ENCODE measurements at regions of chr4 and their contacts with region 1.

Region 1: DNA sequence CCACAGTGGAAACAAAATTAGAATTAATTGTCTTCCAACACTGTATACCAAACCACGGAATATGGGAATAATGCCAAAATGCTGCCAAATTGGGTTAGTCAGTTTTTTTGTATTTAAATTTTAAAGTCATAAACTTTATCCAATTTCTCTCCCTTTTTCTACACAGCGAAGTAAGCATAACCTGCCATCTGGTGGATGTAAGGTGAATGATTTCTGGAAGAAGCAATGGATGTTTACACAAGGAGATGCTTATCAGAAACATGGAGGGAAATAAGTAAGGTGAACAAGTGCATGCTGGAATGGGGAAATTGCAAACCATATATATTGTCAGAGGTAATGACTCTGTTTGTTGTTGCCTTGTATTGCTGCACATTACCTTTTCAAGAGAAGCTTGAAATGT is 691.9 kb downstream of the TECRL start:
- DNase-seq: peak; percentile 82
- ATAC-seq: peak; percentile 70
- H3K4me3 ChIP-seq: no peak overlapping the region
- H3K27ac ChIP-seq: no peak overlapping the region
- H3K4me1 ChIP-seq: no peaks in the 10 kb centered on the region
- H3K27me3 ChIP-seq: no peaks in the 10 kb centered on the region
- CTCF ChIP-seq: peak; percentile 85

Region 2: DNA sequence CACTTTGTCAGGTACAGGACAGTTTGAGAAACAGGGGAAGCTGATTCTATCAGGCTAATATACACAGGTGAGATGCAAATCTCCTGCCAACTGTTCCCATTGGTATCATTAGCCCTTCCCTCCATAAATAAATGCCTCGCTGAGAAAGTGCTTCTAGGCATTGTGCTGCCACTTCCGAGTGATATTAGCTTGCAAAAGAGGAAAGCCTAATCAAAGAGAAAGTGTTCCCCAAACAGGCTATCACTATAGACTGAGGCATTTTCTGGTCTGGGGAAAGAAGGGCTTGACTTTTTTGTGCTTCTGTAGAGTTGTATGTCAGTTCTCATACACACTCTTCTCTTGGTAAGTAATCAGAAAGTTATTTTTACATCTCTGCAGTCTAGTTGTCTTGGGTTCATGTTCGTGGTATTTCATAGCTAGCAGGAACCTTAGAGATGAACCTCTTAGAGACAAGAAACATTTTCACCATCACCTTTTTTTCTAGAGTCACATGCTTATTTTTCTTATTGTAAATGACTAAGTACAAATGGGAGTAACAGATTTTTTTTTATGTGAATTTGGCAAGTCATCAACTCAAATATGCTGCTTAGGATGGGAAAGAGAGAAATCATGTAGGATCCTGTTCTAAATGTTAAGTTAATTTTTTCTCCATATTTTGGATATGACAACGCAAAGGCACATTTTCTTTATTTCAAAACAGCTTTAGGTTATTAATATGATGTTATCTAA is 1507.5 kb before region 1 on chr4:
- CTCF ChIA-PET with region 1: no interaction called
- POLR2A ChIA-PET with region 1: no interaction called
- intact Hi-C with region 1: no loop called
- DNase-seq: no peak
- ATAC-seq: no peak
- H3K4me3 ChIP-seq: no peak overlapping the region
- H3K27ac ChIP-seq: no peak overlapping the region
- H3K4me1 ChIP-seq: no peaks in the 10 kb centered on the region
- H3K27me3 ChIP-seq: no peaks in the 10 kb centered on the region
- CTCF ChIP-seq: no peak

Region 3: DNA sequence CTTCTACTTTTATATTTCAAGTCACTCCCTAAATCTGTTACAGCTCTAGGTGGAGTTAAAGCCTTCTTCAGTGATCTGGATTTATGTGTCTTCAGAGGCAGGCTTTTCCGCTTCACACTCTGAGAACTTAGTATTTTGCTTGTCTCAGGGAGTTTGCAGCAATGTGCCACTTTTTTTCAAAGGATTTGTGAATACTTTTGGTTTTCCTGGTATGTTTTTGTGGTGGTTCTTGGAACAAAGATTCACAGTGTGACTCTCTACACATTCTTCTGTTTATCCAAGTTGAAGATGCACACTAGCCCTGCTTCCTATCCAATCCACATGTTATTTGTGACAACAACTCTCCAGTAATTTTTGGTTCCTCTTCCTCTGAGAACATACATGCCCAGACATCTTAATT is 561.8 kb before region 1 on chr4:
- CTCF ChIA-PET with region 1: no interaction called
- POLR2A ChIA-PET with region 1: no interaction called
- intact Hi-C with region 1: no loop called
- DNase-seq: no peak
- ATAC-seq: no peak
- H3K4me3 ChIP-seq: no peak overlapping the region
- H3K27ac ChIP-seq: no peak overlapping the region
- H3K4me1 ChIP-seq: no peaks in the 10 kb centered on the region
- H3K27me3 ChIP-seq: no peaks in the 10 kb centered on the region
- CTCF ChIP-seq: no peak

Region 4: GRCh38 chr4:63218856-63219255 is 498.5 kb before region 1 on chr4:
- CTCF ChIA-PET with region 1: no interaction called
- POLR2A ChIA-PET with region 1: no interaction called
- intact Hi-C with region 1: no loop called
- DNase-seq: no peak
- ATAC-seq: no peak
- H3K4me3 ChIP-seq: no peak overlapping the region
- H3K27ac ChIP-seq: no peak overlapping the region
- H3K4me1 ChIP-seq: no peaks in the 10 kb centered on the region
- H3K27me3 ChIP-seq: no peaks in the 10 kb centered on the region
- CTCF ChIP-seq: no peak

Region 5: GRCh38 chr4:64095398-64095797 is 378.0 kb after region 1 on chr4:
- CTCF ChIA-PET with region 1: no interaction called
- POLR2A ChIA-PET with region 1: no interaction called
- intact Hi-C with region 1: loop called (anchors 5 kb)
- DNase-seq: peak; percentile 63
- ATAC-seq: peak; percentile 98
- H3K4me3 ChIP-seq: no peak overlapping the region
- H3K27ac ChIP-seq: no peak overlapping the region
- H3K4me1 ChIP-seq: peaks cover 4% of the 10 kb centered on the region; the same call in 1 of the 2 replicates
- H3K27me3 ChIP-seq: no peaks in the 10 kb centered on the region
- CTCF ChIP-seq: no peak

Measured in PC-3 (cell line).